CD8-positive, alpha-beta T cell (primary cell): ENCODE measurements at regions of chr5 and their contacts with region 1.

Region 1: GRCh38 chr5:157142317-157143126 is at the start of gene MED7:
- DNase-seq: peak; percentile 80 to 99 (median 90)
- ATAC-seq: peak; percentile 95
- H3K4me3 ChIP-seq: peak within 1 kb of the TSS; percentile 93 to 99
- H3K4me3 Mint-ChIP-seq: peak within 1 kb of the TSS; percentile 93
- H3K27ac ChIP-seq: peak within 1 kb of the TSS; percentile 90 to 96
- H3K27ac Mint-ChIP-seq: peak within 1 kb of the TSS; percentile 97
- H3K4me1 ChIP-seq: peaks cover 21% of the 10 kb centered on the region
- H3K4me1 Mint-ChIP-seq: peaks cover 40% of the 10 kb centered on the region
- H3K27me3 ChIP-seq: no peaks in the 10 kb centered on the region
- H3K27me3 Mint-ChIP-seq: no peaks in the 10 kb centered on the region
- CTCF ChIP-seq: no peak
- total RNA-seq, gene MED7: 5.4 to 5.9 TPM

Region 2: GRCh38 chr5:157108976-157109375 is 33.5 kb before region 1 on chr5 and contains the start of gene HAVCR2:
- CTCF ChIA-PET with region 1: no interaction called
- POLR2A ChIA-PET with region 1: interaction called, 14 read pairs
- intact Hi-C with region 1: no loop called
- DNase-seq: peak; percentile 24 to 74 (median 54)
- ATAC-seq: peak; percentile 94
- H3K4me3 ChIP-seq: peak within 1 kb of the TSS; percentile 26 to 39
- H3K4me3 Mint-ChIP-seq: peak within 1 kb of the TSS; percentile 84
- H3K27ac ChIP-seq: peak within 1 kb of the TSS; percentile 26 to 70
- H3K27ac Mint-ChIP-seq: peak within 1 kb of the TSS; percentile 95
- H3K4me1 ChIP-seq: peaks cover 22% of the 10 kb centered on the region
- H3K4me1 Mint-ChIP-seq: peaks cover 43% of the 10 kb centered on the region
- H3K27me3 ChIP-seq: no peaks in the 10 kb centered on the region
- H3K27me3 Mint-ChIP-seq: no peaks in the 10 kb centered on the region
- CTCF ChIP-seq: no peak
- total RNA-seq, gene HAVCR2: 1.6 to 3.8 TPM

Region 3: DNA sequence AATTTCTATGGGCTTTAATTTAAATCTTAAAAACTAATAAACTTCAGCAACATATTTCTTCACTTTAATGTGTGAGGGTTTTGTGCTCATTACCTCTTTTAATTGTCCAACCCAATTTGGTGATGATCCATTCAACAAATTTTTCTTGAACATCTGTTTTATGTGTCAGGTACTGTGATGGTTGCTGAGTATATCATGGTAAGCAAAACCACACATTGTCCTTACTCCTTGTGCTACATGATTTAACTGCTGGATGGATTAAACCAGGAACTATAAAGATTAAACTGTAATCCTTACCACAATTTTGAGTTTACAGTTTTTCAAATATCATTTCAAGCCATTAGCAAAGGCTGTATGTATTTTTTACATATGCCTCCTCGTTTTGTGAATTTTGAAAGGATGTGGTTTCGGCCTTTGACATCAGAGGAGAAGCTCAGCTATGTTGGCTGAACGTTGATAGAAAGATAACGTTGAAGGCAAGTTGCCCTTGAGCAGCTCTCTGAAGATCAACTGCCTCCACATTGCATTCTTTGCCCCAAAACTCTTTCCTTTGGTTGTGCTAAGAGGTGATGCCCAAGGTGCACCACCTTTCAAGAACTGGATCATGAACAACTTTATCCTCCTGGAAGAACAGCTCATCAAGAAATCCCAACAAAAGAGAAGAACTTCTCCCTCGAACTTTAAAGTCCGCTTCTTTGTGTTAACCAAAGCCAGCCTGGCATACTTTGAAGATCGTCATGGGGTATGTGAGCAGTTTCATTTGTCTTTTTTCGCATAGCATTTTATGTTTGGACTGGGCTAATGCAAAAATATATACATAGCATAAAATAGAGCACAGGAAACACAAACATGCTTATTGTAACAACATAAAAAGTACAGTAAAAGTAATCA is 38.1 kb after region 1 on chr5 and contains the start of gene ITK:
- CTCF ChIA-PET with region 1: interaction called, 4 read pairs
- POLR2A ChIA-PET with region 1: interaction called, 13 read pairs
- intact Hi-C with region 1: no loop called
- DNase-seq: peak in 5 of 9 experiments; percentile 39 to 90 (median 73)
- ATAC-seq: peak; percentile 76
- H3K4me3 ChIP-seq: peak within 1 kb of the TSS; percentile 78 to 84
- H3K4me3 Mint-ChIP-seq: peak within 1 kb of the TSS; percentile 93
- H3K27ac ChIP-seq: peak within 1 kb of the TSS; percentile 79 to 80
- H3K27ac Mint-ChIP-seq: peak within 1 kb of the TSS; percentile 95
- H3K4me1 ChIP-seq: peaks cover 39% of the 10 kb centered on the region
- H3K4me1 Mint-ChIP-seq: peaks cover 55% of the 10 kb centered on the region
- H3K27me3 ChIP-seq: no peaks in the 10 kb centered on the region
- H3K27me3 Mint-ChIP-seq: no peaks in the 10 kb centered on the region
- CTCF ChIP-seq: no peak
- total RNA-seq, gene ITK: 222 to 231 TPM

Region 4: GRCh38 chr5:157204765-157205164 is 62.2 kb after region 1 on chr5:
- CTCF ChIA-PET with region 1: interaction called, 14 read pairs
- POLR2A ChIA-PET with region 1: interaction called, 12 read pairs
- intact Hi-C with region 1: no loop called
- DNase-seq: peak in 3 of 9 experiments; percentile 41 to 81 (median 60)
- ATAC-seq: peak; percentile 53
- H3K4me3 ChIP-seq: peak overlapping the region in 1 of 2 experiments; percentile 35
- H3K4me3 Mint-ChIP-seq: peak overlapping the region; percentile 54
- H3K27ac ChIP-seq: peak overlapping the region; percentile 34 to 74
- H3K27ac Mint-ChIP-seq: peak overlapping the region; percentile 92
- H3K4me1 ChIP-seq: peaks cover 96% of the 10 kb centered on the region
- H3K4me1 Mint-ChIP-seq: peaks cover 85% of the 10 kb centered on the region
- H3K27me3 ChIP-seq: no peaks in the 10 kb centered on the region
- H3K27me3 Mint-ChIP-seq: no peaks in the 10 kb centered on the region
- CTCF ChIP-seq: no peak

Region 5: DNA sequence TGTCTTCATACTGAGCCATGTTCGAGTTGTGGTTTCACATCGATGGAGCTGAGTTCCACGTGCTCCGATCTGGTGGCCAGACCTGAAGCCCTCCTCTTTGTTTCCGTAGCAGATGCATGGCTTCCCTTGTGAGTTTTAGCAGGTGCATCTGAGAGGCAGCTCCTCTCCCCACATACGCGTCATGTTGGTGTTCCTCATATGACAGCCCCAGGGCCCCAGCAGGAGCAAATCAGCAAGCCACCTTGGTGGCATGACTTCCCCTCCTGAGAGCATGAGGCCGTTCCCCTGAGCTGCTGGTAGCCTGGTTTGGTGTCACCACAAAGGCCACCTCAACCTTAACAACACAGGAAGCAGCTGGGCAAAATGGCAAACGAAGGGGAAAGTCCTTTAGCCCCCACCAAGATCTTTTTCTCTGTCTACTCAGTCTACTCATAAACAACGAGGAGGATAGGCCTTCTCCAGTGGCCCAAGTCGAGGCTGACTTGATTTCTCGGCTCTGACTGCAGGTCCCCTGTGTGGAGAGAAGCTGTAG is 129.3 kb after region 1 on chr5:
- CTCF ChIA-PET with region 1: interaction called, 3 read pairs
- POLR2A ChIA-PET with region 1: interaction called, 35 read pairs
- intact Hi-C with region 1: loop called in 1 of 2 experiments (anchors 2 kb)
- DNase-seq: peak; percentile 73 to 98 (median 88)
- ATAC-seq: peak; percentile 87
- H3K4me3 ChIP-seq: peak overlapping the region in 1 of 2 experiments; percentile 31
- H3K4me3 Mint-ChIP-seq: peak overlapping the region; percentile 56
- H3K27ac ChIP-seq: peak overlapping the region; percentile 79 to 82
- H3K27ac Mint-ChIP-seq: peak overlapping the region; percentile 98
- H3K4me1 ChIP-seq: peaks cover 89% of the 10 kb centered on the region
- H3K4me1 Mint-ChIP-seq: peaks cover 89% of the 10 kb centered on the region
- H3K27me3 ChIP-seq: no peaks in the 10 kb centered on the region
- H3K27me3 Mint-ChIP-seq: no peaks in the 10 kb centered on the region
- CTCF ChIP-seq: no peak

Region 6: DNA sequence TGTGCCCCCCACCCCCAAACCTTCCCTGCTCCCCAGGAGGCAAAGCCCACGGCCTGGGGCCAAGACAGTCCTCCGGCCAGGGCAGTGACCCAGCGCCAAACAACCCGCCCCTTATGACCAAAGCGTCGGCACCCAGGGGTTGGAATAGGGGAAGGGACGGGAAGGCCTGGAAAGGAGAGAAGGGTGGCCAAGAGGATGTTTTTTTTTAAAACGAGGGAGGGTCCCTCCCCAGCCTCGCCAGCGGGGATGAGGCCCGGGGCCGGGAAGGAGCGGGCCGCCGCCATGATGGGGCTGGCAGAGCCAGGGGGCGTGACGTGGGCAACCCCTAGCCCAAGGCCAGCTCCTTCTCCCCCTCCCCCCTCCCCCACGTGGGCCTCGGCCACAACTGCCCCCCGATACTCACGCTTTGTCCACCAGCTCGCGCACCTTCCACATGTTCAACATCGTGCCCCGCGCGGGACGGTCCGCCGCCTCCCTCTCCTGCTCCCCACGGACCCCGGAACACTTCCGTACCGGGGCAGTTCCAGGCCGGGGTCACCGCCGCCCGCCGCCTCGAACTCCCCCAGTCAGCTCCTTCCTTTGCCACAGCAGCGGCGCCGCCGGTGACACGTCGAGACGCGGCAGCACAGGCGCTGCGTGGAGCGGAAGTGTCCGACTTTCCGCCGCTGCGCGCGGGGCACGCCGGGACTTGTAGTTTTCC is 716.2 kb after region 1 on chr5 and contains the start of gene CLINT1:
- CTCF ChIA-PET with region 1: no interaction called
- POLR2A ChIA-PET with region 1: no interaction called
- intact Hi-C with region 1: loop called (anchors 2 to 10 kb)
- DNase-seq: peak; percentile 66 to 93 (median 87)
- ATAC-seq: peak; percentile 94
- H3K4me3 ChIP-seq: peak within 1 kb of the TSS; percentile 78 to 86
- H3K4me3 Mint-ChIP-seq: peak within 1 kb of the TSS; percentile 89
- H3K27ac ChIP-seq: peak within 1 kb of the TSS; percentile 74 to 90
- H3K27ac Mint-ChIP-seq: peak within 1 kb of the TSS; percentile 95
- H3K4me1 ChIP-seq: peaks cover 41% of the 10 kb centered on the region
- H3K4me1 Mint-ChIP-seq: peaks cover 65% of the 10 kb centered on the region
- H3K27me3 ChIP-seq: no peaks in the 10 kb centered on the region
- H3K27me3 Mint-ChIP-seq: no peaks in the 10 kb centered on the region
- CTCF ChIP-seq: no peak
- total RNA-seq, gene CLINT1: 94.7 to 101 TPM

Region 7: GRCh38 chr5:158174918-158175851 is 1032.7 kb after region 1 on chr5:
- CTCF ChIA-PET with region 1: no interaction called
- POLR2A ChIA-PET with region 1: no interaction called
- intact Hi-C with region 1: no loop called
- DNase-seq: peak; percentile 10 to 66 (median 46)
- ATAC-seq: peak; percentile 44
- H3K4me3 ChIP-seq: no peak overlapping the region
- H3K4me3 Mint-ChIP-seq: no peak overlapping the region
- H3K27ac ChIP-seq: no peak overlapping the region
- H3K27ac Mint-ChIP-seq: no peak overlapping the region
- H3K4me1 ChIP-seq: no peaks in the 10 kb centered on the region
- H3K4me1 Mint-ChIP-seq: peaks cover 3% of the 10 kb centered on the region
- H3K27me3 ChIP-seq: no peaks in the 10 kb centered on the region
- H3K27me3 Mint-ChIP-seq: no peaks in the 10 kb centered on the region
- CTCF ChIP-seq: peak; percentile 56